ENCODE measurements at regions of chr15 and their contacts with region 1.

Region 1: GRCh38 chr15:78108299-78109084 is 16.1 kb downstream of the SH2D7 start:
- DNase-seq: peak; percentile 92
- ATAC-seq: peak; percentile 90

Region 2: DNA sequence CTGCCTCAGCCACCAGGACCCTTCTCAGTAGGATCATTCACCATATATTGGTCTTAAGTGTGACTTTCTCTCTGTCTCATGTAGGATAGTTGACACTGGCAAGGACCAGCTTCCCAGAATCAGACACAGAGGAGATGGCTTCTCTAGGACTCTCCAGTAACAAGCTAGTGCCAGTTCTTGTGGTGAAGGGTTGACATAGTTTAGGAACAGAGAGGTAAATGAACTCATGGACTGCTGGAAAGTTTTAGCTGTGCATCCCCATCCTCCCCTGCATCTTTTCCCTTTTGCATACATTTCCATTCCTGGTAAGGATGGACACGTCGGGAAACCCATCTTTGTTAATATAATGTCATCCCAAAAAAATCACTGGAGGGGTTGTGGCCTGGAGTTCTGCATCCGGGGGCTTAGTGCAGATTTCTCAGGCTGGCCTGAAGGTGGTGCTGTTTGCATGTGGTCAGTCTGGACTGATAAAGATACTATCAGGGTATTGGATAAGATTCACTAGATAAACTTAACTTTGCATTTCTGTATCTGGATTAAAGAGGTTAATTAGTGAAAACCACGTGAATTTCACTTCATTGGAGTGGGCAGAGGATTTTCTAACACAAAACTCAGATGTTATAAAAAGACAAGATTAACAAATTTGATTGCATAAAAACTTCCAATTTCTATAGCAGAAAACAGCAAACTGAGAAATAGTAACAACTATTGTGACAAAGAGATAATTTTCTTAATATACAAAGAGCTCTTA is 141.8 kb before region 1 on chr15:
- intact Hi-C with region 1: loop called (anchors 5 kb)
- DNase-seq: no peak
- ATAC-seq: peak; percentile 88

Region 3: DNA sequence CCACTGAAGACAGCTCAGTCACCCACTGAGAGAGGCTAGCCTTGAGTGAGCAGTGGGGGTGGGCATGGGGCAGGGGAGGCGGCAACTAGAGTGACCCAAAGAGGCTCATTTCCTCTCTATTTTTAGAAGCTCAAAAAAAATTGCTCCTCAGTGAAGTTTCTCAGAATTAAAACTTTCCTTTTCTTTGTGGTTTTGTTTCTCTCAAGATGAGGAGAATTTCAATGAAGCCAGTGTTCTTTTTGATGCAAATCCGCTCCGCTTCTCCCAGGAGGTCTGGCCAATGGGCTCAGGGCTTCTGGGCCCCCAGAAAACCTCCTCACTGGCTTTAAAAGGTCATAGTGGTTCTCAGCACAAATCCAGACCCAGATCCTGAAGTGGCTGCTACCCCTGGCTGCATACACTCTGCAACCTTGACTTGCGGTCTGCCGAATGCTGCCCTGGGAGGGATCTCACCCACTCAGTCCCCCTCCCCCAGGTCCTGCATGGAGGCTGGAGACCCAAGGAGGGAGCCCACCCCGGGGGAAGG is 126.1 kb after region 1 on chr15 and contains the start of gene ACSBG1:
- intact Hi-C with region 1: loop called (anchors 10 kb)
- DNase-seq: peak; percentile 37
- ATAC-seq: peak; percentile 48
- total RNA-seq, gene ACSBG1: 0.18 TPM

Measured in sciatic nerve (tissue), 2 donors.